Stomach (tissue), 19 donors: ENCODE measurements at regions of chr2 and their contacts with region 1.

Region 1: GRCh38 chr2:19362755-19363473 is 4.5 kb upstream of the OSR1 start:
- DNase-seq: peak; percentile 78 to 94
- H3K4me3 ChIP-seq: peak overlapping the region; percentile 49 to 60 (median 56)
- H3K27ac ChIP-seq: peak overlapping the region; percentile 39 to 72 (median 56)
- H3K4me1 ChIP-seq: peaks cover 18 to 47% (median 37%) of the 10 kb centered on the region in 4 donors
- H3K27me3 ChIP-seq: peaks cover 0 to 61% (median 32%) of the 10 kb centered on the region in 3 donors
- CTCF ChIP-seq: peak in 4 of 7 experiments; percentile 65 to 80 (median 74)
- EP300 ChIP-seq: no peak
- POLR2A ChIP-seq: no peak

Region 2: DNA sequence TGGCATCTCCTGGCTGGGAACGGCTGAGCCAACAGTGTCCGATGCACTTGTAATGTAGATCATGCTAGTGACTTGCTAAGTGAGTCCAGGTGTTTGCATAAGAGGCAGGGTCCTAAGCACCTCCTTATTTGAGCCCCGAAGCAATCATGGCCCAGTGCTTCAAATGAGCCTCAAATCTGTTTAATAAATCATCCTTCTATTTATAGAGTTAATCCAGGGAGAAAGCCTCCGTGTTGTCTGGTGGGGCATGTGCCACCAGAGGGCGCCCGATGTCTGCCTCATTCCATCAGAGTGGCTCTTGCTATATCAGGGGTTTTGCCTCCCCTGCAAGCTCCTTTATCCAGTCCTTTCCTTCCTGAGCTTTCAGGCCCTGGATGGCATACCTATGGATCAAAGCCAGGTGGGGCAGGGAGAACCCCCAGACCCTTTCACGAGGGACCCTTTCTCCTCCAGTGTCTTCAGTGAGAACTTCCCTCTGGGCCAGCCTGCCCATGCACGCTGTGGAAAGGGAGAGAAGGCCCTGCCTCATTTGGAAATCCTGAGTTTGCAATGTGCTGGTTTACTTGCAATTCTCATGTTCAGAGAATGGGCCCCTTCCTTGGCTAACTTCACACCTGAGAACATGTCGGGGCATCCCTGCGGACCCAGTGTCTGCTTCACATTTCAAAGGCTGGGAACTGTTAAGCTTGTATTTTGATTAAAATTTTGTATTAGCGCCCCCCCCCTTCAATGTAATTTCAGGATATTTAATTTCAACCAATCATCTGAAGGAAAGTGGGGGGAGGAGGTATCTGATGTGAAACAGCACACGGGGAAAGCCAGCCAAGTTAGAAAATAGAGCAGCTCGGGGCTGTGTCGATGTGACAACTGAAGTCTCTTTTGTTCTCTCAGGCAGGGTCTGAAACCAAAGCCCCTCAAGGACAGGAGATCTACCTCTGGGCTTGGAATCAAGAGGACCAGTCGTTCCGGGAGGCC is 842.2 kb before region 1 on chr2:
- intact Hi-C with region 1: loop called (anchors 10 kb)
- DNase-seq: peak; percentile 84 to 95
- H3K4me3 ChIP-seq: no peak overlapping the region
- H3K27ac ChIP-seq: peak overlapping the region in 3 of 5 donors; percentile 43 to 69 (median 67)
- H3K4me1 ChIP-seq: peaks cover 0 to 48% (median 21%) of the 10 kb centered on the region in 4 donors
- H3K27me3 ChIP-seq: no peaks in the 10 kb centered on the region
- CTCF ChIP-seq: peak in 5 of 7 experiments; percentile 76 to 89 (median 87)
- EP300 ChIP-seq: no peak
- POLR2A ChIP-seq: no peak

Region 3: GRCh38 chr2:19207452-19207851 is 155.5 kb before region 1 on chr2:
- intact Hi-C with region 1: no loop called
- DNase-seq: no peak
- H3K4me3 ChIP-seq: no peak overlapping the region
- H3K27ac ChIP-seq: no peak overlapping the region
- H3K4me1 ChIP-seq: no peaks in the 10 kb centered on the region
- H3K27me3 ChIP-seq: no peaks in the 10 kb centered on the region
- CTCF ChIP-seq: no peak
- EP300 ChIP-seq: no peak
- POLR2A ChIP-seq: no peak

Region 4: DNA sequence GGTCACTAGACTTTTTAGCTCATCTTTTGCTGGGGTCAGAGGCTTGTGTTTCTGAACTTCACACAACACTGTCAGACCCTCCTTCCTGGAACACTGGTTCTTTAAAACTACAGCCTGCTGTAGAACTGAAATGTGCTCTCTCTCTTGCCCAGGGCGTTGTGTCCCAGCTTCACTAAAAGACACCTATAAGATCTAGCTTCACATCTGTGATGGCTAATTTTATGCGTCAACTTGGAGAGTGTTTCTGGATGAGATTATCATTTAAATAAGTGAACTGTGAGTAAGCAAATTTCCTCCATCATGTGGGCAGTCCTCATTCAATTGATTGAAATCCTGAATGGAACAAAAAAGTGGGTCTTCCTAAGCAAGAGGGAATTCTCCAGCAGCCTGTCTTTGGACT is 144.8 kb before region 1 on chr2:
- intact Hi-C with region 1: no loop called
- DNase-seq: no peak
- H3K4me3 ChIP-seq: no peak overlapping the region
- H3K27ac ChIP-seq: no peak overlapping the region
- H3K4me1 ChIP-seq: peaks cover 0 to 8% (median 0%) of the 10 kb centered on the region in 4 donors
- H3K27me3 ChIP-seq: no peaks in the 10 kb centered on the region
- CTCF ChIP-seq: no peak
- EP300 ChIP-seq: no peak
- POLR2A ChIP-seq: no peak